GM13977 (cell line): ENCODE measurements at regions of chr14 and their contacts with region 1.

Region 1: GRCh38 chr14:63388763-63389431 is 70.2 kb upstream of the GPHB5 start:
- DNase-seq: peak; percentile 28
- CTCF ChIP-seq: peak; percentile 95

Region 2: DNA sequence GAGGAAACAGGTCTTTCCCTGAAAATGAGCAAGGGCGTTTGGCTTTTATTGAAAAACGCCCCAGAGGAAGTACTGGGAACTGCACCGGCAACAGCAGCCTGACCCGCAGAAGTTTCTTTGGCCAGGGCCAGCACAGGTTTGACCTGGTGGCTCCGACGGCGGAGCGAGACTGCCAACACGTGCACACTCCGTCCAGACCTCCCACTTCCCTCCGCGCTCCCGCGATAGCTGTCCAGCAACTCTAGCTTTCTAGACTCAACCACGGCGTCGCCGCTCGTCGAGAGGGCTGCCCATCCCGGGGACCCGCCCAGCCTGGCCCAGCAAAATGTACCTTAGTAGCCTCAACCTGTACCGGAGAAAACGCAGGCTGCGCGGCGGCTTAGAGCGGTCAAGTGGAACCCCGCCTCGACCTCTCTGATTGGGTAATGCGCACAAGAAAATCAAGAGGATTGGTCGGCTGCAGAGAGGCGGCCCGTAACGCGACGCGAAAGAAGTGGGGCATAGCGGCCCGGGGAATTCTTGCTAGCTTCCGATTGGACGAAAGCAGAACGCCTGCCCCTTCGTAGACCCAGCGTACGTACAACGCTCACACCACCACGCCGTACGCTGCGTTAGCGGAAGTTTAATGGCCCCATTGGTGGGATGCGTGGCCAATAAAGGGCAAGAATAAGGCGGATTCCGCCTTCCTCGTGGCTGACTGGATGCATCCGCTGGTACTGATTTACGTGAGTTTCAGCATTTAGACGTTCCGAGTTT is 252.8 kb after region 1 on chr14 and contains the start of gene WDR89:
- in situ Hi-C with region 1: loop called (anchors 25 kb)
- DNase-seq: peak; percentile 91
- CTCF ChIP-seq: peak; percentile 48

Region 3: DNA sequence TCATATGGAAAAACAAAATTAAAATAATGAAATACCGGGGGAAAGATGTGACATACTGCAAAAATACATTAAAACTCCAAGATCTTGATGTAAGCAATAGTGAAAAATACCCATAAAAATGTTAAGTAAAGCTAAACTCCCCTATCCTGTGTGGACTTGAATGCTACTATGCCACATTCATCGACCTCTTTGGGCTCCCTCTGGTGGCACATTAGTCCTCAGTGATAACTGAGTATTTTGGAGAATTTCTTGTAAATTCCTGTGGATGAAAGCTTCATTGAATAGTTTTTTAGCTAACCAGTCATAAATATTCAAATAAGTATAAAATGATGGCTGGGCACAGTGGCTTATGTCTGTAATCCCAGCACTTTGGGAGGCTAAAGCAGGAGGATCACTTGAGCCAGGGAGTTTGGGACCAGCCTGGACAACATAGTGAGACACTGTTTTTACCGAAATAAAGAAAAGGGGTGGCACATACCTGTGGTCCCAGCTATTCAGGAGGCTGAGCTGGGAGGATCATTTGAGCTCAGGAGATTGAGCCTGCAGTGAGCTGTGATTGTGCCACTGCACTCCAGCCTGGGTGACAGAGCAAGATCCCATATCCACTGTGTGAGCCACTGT is 381.4 kb after region 1 on chr14:
- in situ Hi-C with region 1: loop called (anchors 25 kb)
- DNase-seq: peak; percentile 52
- CTCF ChIP-seq: peak; percentile 59

Region 4: GRCh38 chr14:64303471-64303917 is 914.6 kb after region 1 on chr14:
- in situ Hi-C with region 1: loop called (anchors 25 kb)
- DNase-seq: peak; percentile 75
- CTCF ChIP-seq: peak; percentile 67